ENCODE measurements at regions of chr6 and their contacts with region 1.

Region 1: DNA sequence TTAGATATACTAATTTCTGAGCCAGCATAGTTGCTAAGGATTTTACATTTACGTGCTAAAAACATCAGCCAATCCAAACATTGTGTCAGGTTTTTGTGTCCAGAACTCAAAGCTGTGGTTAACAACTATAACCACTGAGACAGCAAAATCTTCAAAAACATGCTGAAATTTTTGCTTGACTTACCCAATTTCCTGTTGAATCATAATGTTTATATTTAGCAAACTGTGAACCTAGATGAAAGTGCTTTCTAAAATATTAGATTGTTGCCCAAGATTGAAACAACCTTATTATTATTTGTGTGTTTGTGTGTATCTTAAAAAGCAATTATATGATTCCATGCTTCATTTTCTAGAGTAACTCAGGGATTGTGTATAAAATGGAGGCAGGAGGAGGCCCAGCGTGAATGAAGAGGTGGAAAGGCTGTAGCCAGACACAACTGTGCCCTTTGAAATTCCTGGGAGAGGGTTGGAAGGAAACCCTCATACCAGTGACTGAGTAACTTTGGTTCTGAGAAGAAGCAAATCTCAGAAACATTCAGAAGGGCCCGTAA is 48.0 kb downstream of the ARMC2 start:
- DNase-seq: no peak
- ATAC-seq: peak; percentile 43
- H3K4me3 ChIP-seq: no peak overlapping the region
- H3K27ac ChIP-seq: peak overlapping the region in 1 of 4 donors; percentile 44
- H3K4me1 ChIP-seq: no peaks in the 10 kb centered on the region
- H3K27me3 ChIP-seq: no peaks in the 10 kb centered on the region
- CTCF ChIP-seq: no peak
- POLR2A ChIP-seq: no peak

Region 2: GRCh38 chr6:108541838-108542759 is 354.1 kb before region 1 on chr6:
- intact Hi-C with region 1: loop called (anchors 5 kb)
- DNase-seq: peak; percentile 77 to 82 (median 80)
- ATAC-seq: peak; percentile 91
- H3K4me3 ChIP-seq: no peak overlapping the region
- H3K27ac ChIP-seq: no peak overlapping the region
- H3K4me1 ChIP-seq: peaks cover 11% of the 10 kb centered on the region
- H3K27me3 ChIP-seq: no peaks in the 10 kb centered on the region
- CTCF ChIP-seq: peak; percentile 48 to 97 (median 94)
- POLR2A ChIP-seq: no peak

Region 3: GRCh38 chr6:108848116-108848868 is 47.9 kb before region 1 on chr6 and contains the start of gene ARMC2:
- intact Hi-C with region 1: loop called (anchors 10 kb)
- DNase-seq: peak; percentile 92 to 93 (median 92)
- ATAC-seq: peak; percentile 97
- H3K4me3 ChIP-seq: peak within 1 kb of the TSS; percentile 33 to 82
- H3K27ac ChIP-seq: peak within 1 kb of the TSS; percentile 40 to 82 (median 68)
- H3K4me1 ChIP-seq: peaks cover 24% of the 10 kb centered on the region
- H3K27me3 ChIP-seq: no peaks in the 10 kb centered on the region
- CTCF ChIP-seq: no peak
- POLR2A ChIP-seq: peak; percentile 33 to 78 (median 66)
- total RNA-seq, gene ARMC2: 0.66 to 1.6 TPM

Region 4: GRCh38 chr6:109073344-109074132 is 177.4 kb after region 1 on chr6:
- intact Hi-C with region 1: loop called (anchors 10 kb)
- DNase-seq: peak in 3 of 4 donors; percentile 28 to 63 (median 35)
- ATAC-seq: no peak
- H3K4me3 ChIP-seq: no peak overlapping the region
- H3K27ac ChIP-seq: no peak overlapping the region
- H3K4me1 ChIP-seq: peaks cover 8% of the 10 kb centered on the region
- H3K27me3 ChIP-seq: no peaks in the 10 kb centered on the region
- CTCF ChIP-seq: peak; percentile 39 to 78 (median 69)
- POLR2A ChIP-seq: no peak